Pancreas (tissue), 10 donors: ENCODE measurements at regions of chr21 and their contacts with region 1.

Region 1: GRCh38 chr21:42156690-42157577 is 62.0 kb upstream of the ABCG1 start:
- DNase-seq: peak in 1 of 6 donors; percentile 58
- ATAC-seq: peak in 2 of 4 donors; percentile 31 to 36
- H3K4me3 ChIP-seq: no peak overlapping the region
- H3K27ac ChIP-seq: no peak overlapping the region
- H3K4me1 ChIP-seq: peaks cover 0 to 2% (median 0%) of the 10 kb centered on the region in 3 donors
- H3K27me3 ChIP-seq: no peaks in the 10 kb centered on the region
- CTCF ChIP-seq: no peak

Region 2: GRCh38 chr21:41899426-41900202 is 257.3 kb before region 1 on chr21:
- intact Hi-C with region 1: no loop called
- DNase-seq: no peak
- ATAC-seq: no peak
- H3K4me3 ChIP-seq: no peak overlapping the region
- H3K27ac ChIP-seq: no peak overlapping the region
- H3K4me1 ChIP-seq: peaks cover 11 to 18% (median 16%) of the 10 kb centered on the region in 3 donors
- H3K27me3 ChIP-seq: no peaks in the 10 kb centered on the region
- CTCF ChIP-seq: no peak

Region 3: GRCh38 chr21:42258153-42258884 is 101.4 kb after region 1 on chr21:
- intact Hi-C with region 1: loop called in 1 of 3 experiments (anchors 10 kb)
- DNase-seq: peak; percentile 53 to 89 (median 76)
- ATAC-seq: peak; percentile 74 to 89 (median 82)
- H3K4me3 ChIP-seq: no peak overlapping the region
- H3K27ac ChIP-seq: no peak overlapping the region
- H3K4me1 ChIP-seq: peaks cover 3 to 6% (median 5%) of the 10 kb centered on the region in 3 donors
- H3K27me3 ChIP-seq: no peaks in the 10 kb centered on the region
- CTCF ChIP-seq: peak; percentile 79 to 86 (median 84)

Region 4: GRCh38 chr21:42449296-42449927 is 292.5 kb after region 1 on chr21:
- intact Hi-C with region 1: no loop called
- DNase-seq: no peak
- ATAC-seq: peak in 1 of 4 donors; percentile 5
- H3K4me3 ChIP-seq: no peak overlapping the region
- H3K27ac ChIP-seq: peak overlapping the region in 1 of 4 donors; percentile 27
- H3K4me1 ChIP-seq: no peaks in the 10 kb centered on the region
- H3K27me3 ChIP-seq: no peaks in the 10 kb centered on the region
- CTCF ChIP-seq: no peak